ENCODE measurements at regions of chr4 and their contacts with region 1.

Region 1: GRCh38 chr4:95178938-95179337 is 369.8 kb downstream of the UNC5C start:
- DNase-seq: no peak
- ATAC-seq: no peak
- H3K4me3 ChIP-seq: no peak overlapping the region
- H3K4me3 Mint-ChIP-seq: no peak overlapping the region
- H3K27ac ChIP-seq: no peak overlapping the region
- H3K27ac Mint-ChIP-seq: no peak overlapping the region
- H3K4me1 ChIP-seq: peaks cover 0 to 6% of the 10 kb centered on the region in 2 experiments
- H3K4me1 Mint-ChIP-seq: no peaks in the 10 kb centered on the region
- H3K27me3 ChIP-seq: peaks cover 0 to 3% of the 10 kb centered on the region in 2 experiments
- H3K27me3 Mint-ChIP-seq: peaks cover 2 to 3% of the 10 kb centered on the region in 2 donors

Region 2: DNA sequence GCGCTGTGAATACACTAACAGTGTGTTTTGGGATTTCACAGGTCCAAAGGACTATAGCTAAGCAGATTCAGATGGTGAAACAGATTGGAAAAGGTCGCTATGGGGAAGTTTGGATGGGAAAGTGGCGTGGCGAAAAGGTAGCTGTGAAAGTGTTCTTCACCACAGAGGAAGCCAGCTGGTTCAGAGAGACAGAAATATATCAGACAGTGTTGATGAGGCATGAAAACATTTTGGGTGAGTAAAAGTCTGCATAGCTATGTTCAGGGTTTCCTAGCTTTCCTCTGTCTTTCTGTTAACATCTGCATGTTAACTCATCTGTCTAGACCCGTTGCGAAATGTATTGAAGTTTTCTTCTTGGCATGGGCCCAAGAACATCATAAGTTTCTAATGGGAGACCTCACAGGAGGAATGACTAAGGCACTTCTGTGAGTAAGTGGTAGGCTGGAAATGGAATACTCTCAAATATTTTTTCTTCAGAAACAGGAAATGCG is 49.1 kb before region 1 on chr4:
- CTCF ChIA-PET with region 1: no interaction called
- POLR2A ChIA-PET with region 1: no interaction called
- DNase-seq: no peak
- ATAC-seq: no peak
- H3K4me3 ChIP-seq: no peak overlapping the region
- H3K4me3 Mint-ChIP-seq: no peak overlapping the region
- H3K27ac ChIP-seq: no peak overlapping the region
- H3K27ac Mint-ChIP-seq: no peak overlapping the region
- H3K4me1 ChIP-seq: no peaks in the 10 kb centered on the region
- H3K4me1 Mint-ChIP-seq: peaks cover 0 to 7% (median 2%) of the 10 kb centered on the region in 3 donors
- H3K27me3 ChIP-seq: no peaks in the 10 kb centered on the region
- H3K27me3 Mint-ChIP-seq: peaks cover 0 to 2% of the 10 kb centered on the region in 2 donors

Region 3: GRCh38 chr4:95142932-95143331 is 36.0 kb before region 1 on chr4:
- CTCF ChIA-PET with region 1: interaction called in 1 of 2 experiments, 11 read pairs
- POLR2A ChIA-PET with region 1: interaction called in 1 of 2 experiments, 3 read pairs
- DNase-seq: no peak
- ATAC-seq: no peak
- H3K4me3 ChIP-seq: no peak overlapping the region
- H3K4me3 Mint-ChIP-seq: no peak overlapping the region
- H3K27ac ChIP-seq: no peak overlapping the region
- H3K27ac Mint-ChIP-seq: no peak overlapping the region
- H3K4me1 ChIP-seq: peaks cover 0 to 2% of the 10 kb centered on the region in 2 experiments
- H3K4me1 Mint-ChIP-seq: no peaks in the 10 kb centered on the region
- H3K27me3 ChIP-seq: no peaks in the 10 kb centered on the region
- H3K27me3 Mint-ChIP-seq: peaks cover 0 to 15% of the 10 kb centered on the region in 2 donors

Measured in T-cell (primary cell).